ENCODE measurements at regions of chr3 and their contacts with region 1.

Region 1: DNA sequence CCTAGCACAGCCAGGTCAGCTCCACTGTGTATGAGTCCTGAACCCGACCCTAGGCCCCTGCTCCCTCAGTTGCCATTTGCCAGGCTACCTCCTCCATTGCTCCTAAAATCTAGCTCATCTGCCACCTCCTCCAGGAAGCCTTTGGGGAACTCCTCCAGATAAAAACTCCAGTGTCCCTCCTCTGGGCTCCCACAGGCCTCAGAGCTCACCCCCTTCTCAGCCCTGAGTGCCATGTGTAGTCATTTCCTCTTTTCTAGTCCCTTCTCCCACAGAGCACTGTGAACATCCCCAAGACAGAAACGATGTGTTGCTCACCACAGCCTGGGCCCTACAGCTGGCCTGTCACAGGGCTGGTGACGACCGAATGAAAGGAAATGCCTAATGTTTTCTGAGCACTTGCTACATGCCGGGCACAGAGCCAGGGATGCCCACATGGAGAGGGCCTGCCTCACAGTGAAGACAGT is 61.0 kb downstream of the IQSEC1 start:
- DNase-seq: peak; percentile 86
- ATAC-seq: peak; percentile 57
- H3K4me3 Mint-ChIP-seq: peak overlapping the region; percentile 72
- H3K27ac Mint-ChIP-seq: peak overlapping the region; percentile 98
- H3K4me1 Mint-ChIP-seq: peaks cover 85% of the 10 kb centered on the region
- H3K27me3 Mint-ChIP-seq: no peaks in the 10 kb centered on the region

Region 2: DNA sequence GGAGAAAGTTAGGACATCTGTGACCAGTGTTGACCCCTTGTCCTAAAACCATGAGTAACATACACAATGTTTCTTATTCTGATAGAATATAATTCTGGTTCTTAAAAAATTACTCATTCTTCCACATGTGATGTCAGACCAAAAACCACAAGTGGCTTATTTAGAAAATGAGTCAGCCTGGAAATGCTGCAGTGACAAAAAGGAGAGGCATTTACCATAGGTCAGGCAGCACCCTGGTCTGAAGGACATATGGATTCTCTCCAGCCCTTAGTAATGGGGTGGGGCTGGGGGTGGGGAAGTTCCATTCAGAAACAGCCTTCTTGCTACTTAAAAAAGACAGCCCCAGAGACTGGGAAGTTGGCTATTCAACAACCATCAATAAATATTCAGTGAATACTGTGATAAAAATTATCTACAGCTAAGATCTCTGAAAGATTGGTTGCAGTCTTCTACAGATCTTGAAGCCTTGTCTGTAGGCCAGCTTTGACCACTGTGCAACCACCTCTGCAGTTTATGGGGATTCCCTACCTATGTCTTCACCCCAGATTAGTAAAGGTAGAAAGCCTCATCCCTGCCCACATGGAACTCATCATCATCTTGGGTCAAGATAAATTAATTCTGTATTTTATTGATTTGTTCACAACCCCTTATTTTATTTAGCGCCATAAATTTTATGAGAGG is 818.6 kb before region 1 on chr3:
- CTCF ChIA-PET with region 1: no interaction called
- POLR2A ChIA-PET with region 1: no interaction called
- intact Hi-C with region 1: loop called in 1 of 2 experiments (anchors 10 kb)
- DNase-seq: peak; percentile 63
- ATAC-seq: peak; percentile 60
- H3K4me3 Mint-ChIP-seq: peak overlapping the region; percentile 32
- H3K27ac Mint-ChIP-seq: peak overlapping the region; percentile 87
- H3K4me1 Mint-ChIP-seq: peaks cover 62% of the 10 kb centered on the region
- H3K27me3 Mint-ChIP-seq: peaks cover 4% of the 10 kb centered on the region

Region 3: DNA sequence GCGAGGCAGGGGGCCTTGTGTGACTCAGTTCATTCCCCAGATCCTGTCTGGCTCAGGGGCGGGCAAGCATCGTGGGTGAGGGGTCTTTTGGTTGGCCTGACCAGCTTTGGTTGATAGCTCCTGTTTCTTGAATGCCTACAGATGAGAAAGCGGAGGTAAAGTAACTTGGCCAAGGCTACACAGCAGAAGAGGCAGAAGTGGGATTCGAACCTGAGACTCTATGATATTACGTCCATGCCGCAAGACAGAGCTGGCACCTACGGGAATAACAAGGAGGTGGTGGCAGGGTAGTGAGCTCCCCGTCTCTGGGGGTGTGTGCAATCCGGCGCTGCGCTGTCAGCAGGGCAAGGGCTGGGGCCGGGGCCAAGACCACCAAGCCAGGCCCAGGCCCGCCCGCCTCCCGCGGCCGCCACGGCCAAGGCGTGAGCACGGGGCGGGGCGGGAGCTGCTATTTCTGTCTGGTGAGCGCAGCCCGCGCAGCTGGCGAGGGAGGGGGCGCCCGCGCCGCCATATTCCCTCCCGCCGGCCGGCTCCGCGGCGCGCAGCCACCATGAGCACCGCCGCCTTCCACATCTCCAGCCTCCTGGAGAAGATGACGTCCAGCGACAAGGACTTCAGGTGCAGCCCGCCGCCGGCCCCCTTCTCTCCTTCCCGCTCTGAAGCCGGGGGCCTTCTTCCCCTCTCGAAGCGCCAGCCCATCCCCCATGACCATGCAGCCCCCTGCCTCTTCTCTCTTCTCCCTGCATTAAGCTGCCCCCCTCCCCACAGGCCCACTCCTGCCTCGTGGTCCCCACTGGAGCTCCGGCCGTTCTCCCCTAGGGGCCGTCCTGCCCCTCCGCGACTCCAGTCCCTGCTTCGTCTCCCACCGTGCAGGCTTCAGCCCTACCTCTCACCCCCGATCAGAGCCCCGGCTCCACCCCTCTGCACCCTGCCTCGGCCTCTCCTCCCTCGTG is 215.8 kb before region 1 on chr3 and contains the start of gene CAND2:
- CTCF ChIA-PET with region 1: no interaction called
- POLR2A ChIA-PET with region 1: no interaction called
- intact Hi-C with region 1: no loop called
- DNase-seq: peak; percentile 65
- ATAC-seq: peak; percentile 81
- H3K4me3 Mint-ChIP-seq: peak within 1 kb of the TSS; percentile 71
- H3K27ac Mint-ChIP-seq: peak within 1 kb of the TSS; percentile 70
- H3K4me1 Mint-ChIP-seq: peaks cover 16% of the 10 kb centered on the region
- H3K27me3 Mint-ChIP-seq: no peaks in the 10 kb centered on the region
- total RNA-seq, gene CAND2: 2.1 to 2.2 TPM

Region 4: GRCh38 chr3:12841149-12841970 is 170.9 kb before region 1 on chr3 and contains the start of gene RPL32:
- CTCF ChIA-PET with region 1: no interaction called
- POLR2A ChIA-PET with region 1: no interaction called
- intact Hi-C with region 1: loop called in 1 of 2 experiments (anchors 1 kb)
- DNase-seq: peak; percentile 92
- ATAC-seq: peak; percentile 90
- H3K4me3 Mint-ChIP-seq: peak within 1 kb of the TSS; percentile 98
- H3K27ac Mint-ChIP-seq: peak within 1 kb of the TSS; percentile 99
- H3K4me1 Mint-ChIP-seq: peaks cover 43% of the 10 kb centered on the region
- H3K27me3 Mint-ChIP-seq: no peaks in the 10 kb centered on the region
- total RNA-seq, gene RPL32: 2,842 to 4,727 TPM

Region 5: GRCh38 chr3:12967606-12968351 is 44.5 kb before region 1 on chr3:
- CTCF ChIA-PET with region 1: interaction called, 4 read pairs
- POLR2A ChIA-PET with region 1: interaction called, 3 read pairs
- intact Hi-C with region 1: loop called (anchors 1 to 5 kb)
- DNase-seq: peak; percentile 95
- ATAC-seq: peak; percentile 86
- H3K4me3 Mint-ChIP-seq: peak overlapping the region; percentile 66
- H3K27ac Mint-ChIP-seq: peak overlapping the region; percentile 52
- H3K4me1 Mint-ChIP-seq: peaks cover 59% of the 10 kb centered on the region
- H3K27me3 Mint-ChIP-seq: no peaks in the 10 kb centered on the region

Region 6: DNA sequence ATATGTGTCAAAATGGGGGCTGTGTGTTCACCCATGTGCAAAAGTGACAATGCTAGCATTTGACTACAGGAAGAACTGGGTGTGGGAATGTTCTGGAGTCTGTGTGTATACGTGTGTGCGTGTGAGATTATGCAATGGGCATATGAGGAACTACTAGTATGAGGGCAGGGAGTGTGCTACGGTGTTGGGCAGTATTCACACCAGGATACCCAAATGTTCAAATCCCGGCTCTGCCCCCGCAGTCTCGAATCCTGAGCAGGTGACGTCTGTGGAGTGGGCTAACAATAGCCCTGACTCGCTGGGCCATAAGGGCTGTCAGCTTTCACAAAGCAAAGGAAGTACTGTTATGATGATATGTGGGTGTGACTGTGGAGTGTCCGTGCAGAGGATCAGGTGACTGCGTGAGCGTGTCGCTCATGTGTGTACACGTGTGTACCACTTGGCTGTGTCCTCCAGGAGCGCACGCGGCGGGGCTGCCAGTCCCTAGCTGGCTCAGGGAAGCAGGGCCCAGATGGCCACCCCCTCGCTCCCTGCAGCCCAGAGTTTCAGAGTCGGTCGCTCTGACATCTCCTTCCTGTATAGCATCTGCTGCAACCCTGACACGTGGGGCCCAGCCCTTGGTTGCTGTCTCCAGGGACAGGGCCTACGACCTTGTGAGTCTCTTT is 33.8 kb after region 1 on chr3:
- CTCF ChIA-PET with region 1: no interaction called
- POLR2A ChIA-PET with region 1: no interaction called
- intact Hi-C with region 1: no loop called
- DNase-seq: peak; percentile 49
- ATAC-seq: peak; percentile 80
- H3K4me3 Mint-ChIP-seq: no peak overlapping the region
- H3K27ac Mint-ChIP-seq: no peak overlapping the region
- H3K4me1 Mint-ChIP-seq: peaks cover 12% of the 10 kb centered on the region
- H3K27me3 Mint-ChIP-seq: no peaks in the 10 kb centered on the region

Region 7: DNA sequence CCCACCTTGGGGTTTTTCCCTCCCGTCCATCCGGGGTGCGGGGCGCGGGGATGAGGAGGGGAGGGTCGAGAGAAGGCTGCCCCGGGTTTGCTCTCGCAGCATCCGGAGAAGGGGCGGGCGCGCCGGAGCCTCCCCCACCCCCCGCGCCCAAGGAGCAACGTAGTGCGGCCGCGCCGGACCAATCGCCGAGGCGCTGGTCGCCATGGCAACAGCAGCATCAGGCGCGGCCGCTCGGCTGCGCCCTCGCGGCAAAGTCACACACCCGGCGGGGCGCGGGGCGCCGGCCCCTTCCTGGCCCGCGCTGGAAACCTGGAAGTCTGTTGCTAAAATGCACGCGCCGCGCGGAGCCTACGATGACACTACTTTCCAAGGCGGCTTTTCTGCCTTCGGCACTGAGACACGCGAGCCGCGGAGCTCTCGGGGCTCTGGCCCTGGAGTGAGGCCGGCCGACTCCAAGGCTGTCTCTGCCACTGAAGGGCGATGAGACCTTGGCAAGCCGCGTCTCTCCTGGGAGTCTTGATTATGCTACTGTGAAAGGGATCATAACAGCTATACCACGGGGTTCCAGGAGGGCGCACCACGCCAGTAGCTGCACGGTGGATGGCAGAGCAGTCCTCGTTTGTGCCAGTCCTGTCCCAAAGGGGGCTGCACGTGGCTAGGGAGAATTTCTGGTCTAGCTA is 61.2 kb after region 1 on chr3 and contains the start of gene IQSEC1:
- CTCF ChIA-PET with region 1: no interaction called
- POLR2A ChIA-PET with region 1: no interaction called
- intact Hi-C with region 1: loop called (anchors 1 to 2 kb)
- DNase-seq: peak; percentile 89
- ATAC-seq: peak; percentile 68
- H3K4me3 Mint-ChIP-seq: peak within 1 kb of the TSS; percentile 80
- H3K27ac Mint-ChIP-seq: peak within 1 kb of the TSS; percentile 51
- H3K4me1 Mint-ChIP-seq: peaks cover 34% of the 10 kb centered on the region
- H3K27me3 Mint-ChIP-seq: peaks cover 21% of the 10 kb centered on the region
- total RNA-seq, gene IQSEC1: 36.8 to 40.4 TPM

Region 8: GRCh38 chr3:13479581-13480339 is 467.5 kb after region 1 on chr3 and contains the start of gene HDAC11:
- CTCF ChIA-PET with region 1: no interaction called
- POLR2A ChIA-PET with region 1: no interaction called
- intact Hi-C with region 1: loop called in 1 of 2 experiments (anchors 1 kb)
- DNase-seq: peak; percentile 99
- ATAC-seq: peak; percentile 96
- H3K4me3 Mint-ChIP-seq: peak within 1 kb of the TSS; percentile 89
- H3K27ac Mint-ChIP-seq: peak within 1 kb of the TSS; percentile 90
- H3K4me1 Mint-ChIP-seq: peaks cover 20% of the 10 kb centered on the region
- H3K27me3 Mint-ChIP-seq: no peaks in the 10 kb centered on the region
- total RNA-seq, gene HDAC11: 3.4 to 4.1 TPM